AG04450 (cell line): ENCODE measurements at regions of chr7 and their contacts with region 1.

Region 1: GRCh38 chr7:24812310-24812945 is 55.2 kb upstream of the GSDME start:
- DNase-seq: no peak
- H3K4me3 ChIP-seq: no peak overlapping the region
- H3K27ac ChIP-seq: no peak overlapping the region
- H3K27me3 ChIP-seq: no peaks in the 10 kb centered on the region
- CTCF ChIP-seq: peak; percentile 90

Region 2: DNA sequence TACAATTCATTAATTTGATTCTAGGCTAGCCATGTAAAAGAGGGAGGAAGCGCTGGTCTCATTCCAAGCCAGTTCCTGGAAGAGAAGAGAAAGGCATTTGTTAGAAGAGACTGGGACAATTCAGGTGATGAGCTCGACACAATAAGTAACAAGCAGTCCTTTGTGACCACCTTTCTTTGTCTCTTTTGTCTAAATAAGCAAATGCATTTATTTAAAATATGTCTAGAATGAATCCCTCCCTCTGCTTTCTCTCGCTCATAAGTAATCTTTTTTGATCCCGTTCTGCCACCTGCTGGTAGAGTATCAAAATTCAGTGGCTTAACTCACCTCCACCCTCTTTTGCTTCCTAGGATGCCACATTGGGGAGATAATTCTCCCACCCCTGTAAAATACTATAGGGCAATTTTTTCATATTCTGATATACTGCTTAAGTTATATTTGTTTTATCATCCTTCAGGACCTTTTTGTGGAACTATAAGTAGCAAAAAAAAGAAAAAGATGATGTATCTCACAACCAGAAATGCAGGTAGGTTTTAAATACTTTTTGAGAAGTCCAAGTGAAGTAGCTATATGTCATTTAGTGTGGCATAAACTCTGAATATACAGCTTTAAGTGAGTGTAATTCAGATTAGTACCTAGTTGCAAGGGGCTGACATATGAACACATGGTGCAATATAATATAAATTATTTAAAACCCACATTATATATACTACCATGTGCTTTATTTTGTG is 146.7 kb before region 1 on chr7:
- CTCF ChIA-PET with region 1: interaction called, 12 read pairs
- POLR2A ChIA-PET with region 1: no interaction called
- DNase-seq: peak; percentile 29
- H3K4me3 ChIP-seq: no peak overlapping the region
- H3K27ac ChIP-seq: no peak overlapping the region
- H3K27me3 ChIP-seq: no peaks in the 10 kb centered on the region
- CTCF ChIP-seq: peak; percentile 67

Region 3: GRCh38 chr7:24778543-24779282 is 33.7 kb before region 1 on chr7:
- CTCF ChIA-PET with region 1: interaction called, 28 read pairs
- POLR2A ChIA-PET with region 1: no interaction called
- DNase-seq: no peak
- H3K4me3 ChIP-seq: no peak overlapping the region
- H3K27ac ChIP-seq: peak overlapping the region; percentile 78
- H3K27me3 ChIP-seq: no peaks in the 10 kb centered on the region
- CTCF ChIP-seq: no peak

Region 4: GRCh38 chr7:24877790-24878311 is 65.4 kb after region 1 on chr7:
- CTCF ChIA-PET with region 1: interaction called, 13 read pairs
- POLR2A ChIA-PET with region 1: no interaction called
- DNase-seq: no peak
- H3K4me3 ChIP-seq: no peak overlapping the region
- H3K27ac ChIP-seq: no peak overlapping the region
- H3K27me3 ChIP-seq: no peaks in the 10 kb centered on the region
- CTCF ChIP-seq: no peak

Region 5: GRCh38 chr7:24964191-24964590 is 151.8 kb after region 1 on chr7:
- CTCF ChIA-PET with region 1: interaction called, 10 read pairs
- POLR2A ChIA-PET with region 1: no interaction called
- DNase-seq: no peak
- H3K4me3 ChIP-seq: no peak overlapping the region
- H3K27ac ChIP-seq: no peak overlapping the region
- H3K27me3 ChIP-seq: no peaks in the 10 kb centered on the region
- CTCF ChIP-seq: no peak

Region 6: DNA sequence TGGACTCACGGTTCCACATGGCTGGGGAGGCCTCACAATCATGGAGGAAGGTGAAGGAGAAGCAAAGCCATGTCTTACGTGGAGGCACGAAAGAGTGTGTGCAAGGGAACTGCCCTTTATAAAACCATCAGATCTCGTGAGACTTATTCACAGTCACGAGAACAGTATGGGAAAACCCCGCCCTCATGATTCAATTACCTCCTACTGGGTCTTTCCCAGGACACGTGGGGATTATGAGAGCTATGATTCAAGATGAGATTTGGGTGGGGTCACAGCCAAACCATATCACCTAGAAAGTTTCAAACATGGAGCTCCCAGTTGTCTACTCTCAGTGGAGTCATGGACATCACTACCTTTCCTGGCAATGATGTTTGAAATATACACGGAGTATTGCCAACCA is 263.0 kb after region 1 on chr7:
- CTCF ChIA-PET with region 1: interaction called, 120 read pairs
- POLR2A ChIA-PET with region 1: no interaction called
- DNase-seq: no peak
- H3K4me3 ChIP-seq: no peak overlapping the region
- H3K27ac ChIP-seq: no peak overlapping the region
- H3K27me3 ChIP-seq: no peaks in the 10 kb centered on the region
- CTCF ChIP-seq: no peak